Astrocyte of the cerebellum (primary cell): ENCODE measurements at regions of chr14 and their contacts with region 1.

Region 1: DNA sequence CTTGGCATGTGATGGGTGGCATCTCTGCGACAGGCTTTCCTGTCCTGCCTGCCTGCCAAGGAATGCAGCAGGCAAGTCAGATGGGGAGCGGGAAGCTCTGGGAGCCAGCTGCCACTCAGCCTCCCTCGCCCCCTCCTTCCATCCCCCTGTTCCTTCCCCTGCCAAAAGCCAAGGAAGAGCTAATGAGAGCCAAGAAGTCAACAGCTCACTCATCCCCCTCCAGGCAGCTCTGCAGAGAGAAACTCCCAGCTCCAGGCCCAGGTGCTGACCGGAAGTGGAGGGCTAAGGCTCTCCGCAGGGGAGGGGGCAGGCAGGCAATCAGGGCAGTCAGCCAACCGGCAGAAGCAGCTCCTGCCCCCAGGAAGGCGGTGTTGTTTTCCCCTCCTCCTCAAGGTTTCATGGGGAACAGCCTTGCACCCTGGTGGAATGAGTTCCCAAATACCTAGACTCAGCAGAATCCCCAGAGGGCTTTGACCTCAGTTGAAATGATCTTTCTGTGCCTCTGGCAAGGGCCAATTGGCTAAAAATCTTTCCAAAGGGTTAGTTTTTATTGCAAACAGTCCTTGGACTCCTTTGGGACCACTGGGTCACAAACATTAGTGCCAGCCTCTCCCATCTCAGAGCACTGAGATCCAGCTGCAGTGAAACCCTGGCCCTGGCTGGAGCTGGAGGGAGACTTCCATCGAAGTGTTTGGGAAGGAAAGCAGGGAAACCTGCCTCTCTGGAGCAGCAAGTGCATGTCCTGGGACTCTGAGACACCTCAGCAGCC is 349.1 kb downstream of the DPF3 start:
- DNase-seq: no peak
- H3K4me3 ChIP-seq: no peak overlapping the region
- CTCF ChIP-seq: no peak

Region 2: DNA sequence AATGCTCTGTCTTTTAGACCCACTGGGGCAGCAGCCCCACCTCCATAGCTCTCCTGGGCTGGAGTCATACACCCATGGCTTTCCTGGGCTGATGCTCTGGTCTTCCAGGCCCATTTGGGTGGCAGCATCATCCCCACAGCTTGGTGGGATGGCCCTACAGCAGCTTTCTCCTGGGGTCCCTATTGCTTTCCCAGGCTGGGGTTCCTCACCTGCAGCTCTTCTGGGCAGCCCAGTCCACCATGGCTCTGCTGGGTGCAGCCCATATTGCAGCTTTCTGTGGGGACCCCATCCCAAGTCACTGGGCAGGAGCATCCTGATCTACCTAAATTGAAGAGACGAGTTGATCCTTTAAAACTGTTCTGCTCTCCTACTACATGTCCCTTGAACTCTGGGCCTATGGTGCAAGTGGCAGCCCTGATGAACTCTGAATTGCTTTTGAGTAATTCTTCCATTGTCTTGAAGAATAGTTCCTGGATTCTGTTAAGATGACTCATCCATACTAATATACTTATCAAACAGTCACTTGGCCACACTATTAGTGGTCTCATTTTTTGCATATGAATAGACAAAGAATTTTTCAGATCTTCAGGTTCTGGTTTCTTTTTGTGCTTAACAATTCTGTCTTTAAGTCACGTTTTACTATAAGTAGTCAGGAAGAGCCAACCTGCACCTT is 41.0 kb before region 1 on chr14:
- in situ Hi-C with region 1: no loop called
- DNase-seq: no peak
- H3K4me3 ChIP-seq: no peak overlapping the region
- CTCF ChIP-seq: no peak

Region 3: GRCh38 chr14:72646861-72647528 is 102.2 kb after region 1 on chr14:
- in situ Hi-C with region 1: loop called (anchors 5 kb)
- DNase-seq: peak; percentile 91
- H3K4me3 ChIP-seq: no peak overlapping the region
- CTCF ChIP-seq: no peak

Region 4: DNA sequence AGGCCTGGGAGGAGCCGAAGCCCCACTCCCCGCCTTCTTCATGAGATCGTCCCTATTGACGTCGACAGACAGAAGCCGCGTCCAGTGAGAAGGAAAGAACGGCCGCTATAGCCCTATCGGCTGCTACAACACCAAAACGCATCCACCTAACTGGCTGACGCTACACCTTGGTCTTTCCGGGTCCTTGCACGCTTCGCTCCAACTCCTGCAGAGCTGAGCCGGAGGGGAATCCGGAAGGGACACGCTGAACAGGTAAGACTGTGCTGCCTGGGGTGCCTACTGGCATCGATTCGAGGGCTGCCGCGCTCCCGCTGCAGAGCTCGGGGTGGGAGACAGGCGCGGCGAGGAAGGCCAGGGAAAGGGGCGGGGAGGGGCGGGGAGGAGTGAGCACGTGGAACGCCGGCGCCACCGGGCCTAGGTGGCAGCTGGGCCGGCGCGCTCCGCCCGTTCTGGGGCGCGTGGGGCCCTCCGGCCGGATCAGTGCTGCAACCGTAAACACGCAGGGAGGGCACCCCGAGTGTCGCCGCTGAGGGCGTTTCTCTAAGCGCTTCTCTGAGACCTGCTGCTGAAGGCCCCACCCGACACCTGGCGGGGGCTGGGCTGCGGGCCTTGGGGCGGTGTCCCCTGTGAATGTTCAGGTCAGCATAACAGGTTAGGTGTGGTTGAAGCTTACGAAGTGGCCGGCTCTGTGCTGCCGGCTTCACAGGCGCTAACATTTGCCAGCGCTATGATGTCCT is 381.7 kb after region 1 on chr14 and contains the start of gene DCAF4:
- in situ Hi-C with region 1: no loop called
- DNase-seq: peak; percentile 98
- H3K4me3 ChIP-seq: peak within 1 kb of the TSS; percentile 85
- CTCF ChIP-seq: no peak